ENCODE measurements at regions of chr16 and their contacts with region 1.

Region 1: DNA sequence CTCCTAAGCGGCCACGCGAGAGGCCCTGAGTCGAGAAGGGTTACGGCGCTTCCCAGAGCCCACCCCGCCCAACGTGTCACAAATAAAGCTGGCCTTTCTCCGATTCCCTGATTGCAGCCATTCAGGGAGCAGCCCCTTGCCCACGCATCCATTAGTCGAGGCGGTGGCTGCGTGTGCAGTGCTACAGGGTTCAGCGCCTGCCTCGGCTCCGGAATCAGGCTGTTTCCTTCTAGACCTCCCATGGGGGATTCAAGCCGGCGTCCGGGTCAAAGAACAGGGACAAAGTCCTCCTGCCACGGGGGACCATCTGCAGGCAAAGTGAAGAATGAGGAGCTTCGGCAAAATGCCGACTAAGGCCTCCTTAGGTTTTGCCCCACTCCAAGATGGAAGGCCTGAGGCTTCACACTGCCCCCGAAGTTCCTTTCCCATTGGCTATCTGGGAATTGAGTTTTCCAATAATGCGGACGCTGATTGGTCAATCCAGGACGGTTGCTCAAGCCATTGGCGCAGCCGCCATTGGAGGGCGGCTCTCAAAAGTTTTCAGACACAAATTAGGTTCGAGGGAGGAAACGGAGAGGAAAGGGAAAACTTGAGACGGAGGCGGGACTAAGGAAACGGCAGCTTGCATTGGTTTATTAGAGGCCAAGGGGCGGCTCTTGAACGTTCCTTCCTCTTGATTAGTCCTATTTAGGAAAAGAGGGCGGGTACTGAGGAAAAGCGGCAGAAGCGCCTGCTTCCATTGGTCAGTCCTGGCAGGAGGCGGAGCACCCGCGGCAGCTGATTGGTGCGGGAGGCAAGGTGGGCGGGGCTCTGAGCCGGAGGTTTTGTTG is 430 bp upstream of the KATNB1 start:
- DNase-seq: peak; percentile 94 to 100 (median 96)
- ATAC-seq: peak; percentile 88
- H3K4me3 ChIP-seq: peak overlapping the region; percentile 78
- H3K4me3 Mint-ChIP-seq: peak overlapping the region; percentile 95
- H3K27ac ChIP-seq: peak overlapping the region; percentile 60 to 77
- H3K27ac Mint-ChIP-seq: peak overlapping the region; percentile 87
- H3K4me1 ChIP-seq: peaks cover 29% of the 10 kb centered on the region
- H3K4me1 Mint-ChIP-seq: peaks cover 33% of the 10 kb centered on the region
- H3K27me3 ChIP-seq: no peaks in the 10 kb centered on the region
- H3K27me3 Mint-ChIP-seq: no peaks in the 10 kb centered on the region
- CTCF ChIP-seq: no peak

Region 2: GRCh38 chr16:57185944-57186871 is 548.9 kb before region 1 on chr16 and contains the starts of genes PSME3IP1 and RSPRY1:
- CTCF ChIA-PET with region 1: no interaction called
- POLR2A ChIA-PET with region 1: no interaction called
- intact Hi-C with region 1: loop called in 1 of 2 experiments (anchors 5 kb)
- DNase-seq: peak; percentile 95 to 100 (median 98)
- ATAC-seq: peak; percentile 89
- H3K4me3 ChIP-seq: peak within 1 kb of the TSS; percentile 96
- H3K4me3 Mint-ChIP-seq: peak within 1 kb of the TSS; percentile 94
- H3K27ac ChIP-seq: peak within 1 kb of the TSS; percentile 92
- H3K27ac Mint-ChIP-seq: peak within 1 kb of the TSS; percentile 90
- H3K4me1 ChIP-seq: peaks cover 25% of the 10 kb centered on the region
- H3K4me1 Mint-ChIP-seq: peaks cover 50% of the 10 kb centered on the region
- H3K27me3 ChIP-seq: no peaks in the 10 kb centered on the region
- H3K27me3 Mint-ChIP-seq: no peaks in the 10 kb centered on the region
- CTCF ChIP-seq: no peak
- total RNA-seq, gene PSME3IP1: 77.1 to 77.9 TPM
- total RNA-seq, gene RSPRY1: 19.9 to 21.3 TPM

Region 3: DNA sequence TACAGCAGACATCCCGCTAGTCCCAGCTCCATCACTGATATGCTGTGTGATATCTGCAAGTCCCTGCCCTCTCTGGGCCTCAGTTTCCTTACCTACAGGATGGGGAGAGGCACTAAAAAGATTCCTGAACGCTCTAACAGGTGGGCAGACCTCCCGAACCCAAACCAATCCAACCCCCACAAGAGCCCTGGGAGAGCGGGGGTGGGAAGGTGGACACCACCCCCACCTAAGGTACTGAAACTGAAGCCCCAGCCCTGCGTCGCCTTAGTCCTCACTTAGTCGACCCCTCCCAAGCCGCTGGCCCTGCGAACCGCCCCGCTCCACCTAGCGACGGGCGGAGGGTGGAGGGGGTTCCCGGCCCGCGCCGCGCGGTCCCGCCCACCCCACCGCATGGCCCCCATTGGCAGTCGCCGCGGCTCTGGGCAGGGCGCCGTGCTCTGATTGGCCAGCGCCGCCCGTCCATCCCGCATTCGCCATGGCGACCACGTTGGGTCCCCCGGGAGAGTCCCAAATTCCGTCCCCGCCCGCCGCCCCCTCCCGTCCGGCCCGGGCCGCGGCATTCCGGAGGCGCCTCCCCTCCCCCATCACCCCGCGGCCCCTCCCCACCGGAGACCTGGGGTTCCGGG is 199.3 kb before region 1 on chr16:
- CTCF ChIA-PET with region 1: no interaction called
- POLR2A ChIA-PET with region 1: interaction called, 7 read pairs
- intact Hi-C with region 1: loop called in 1 of 2 experiments (anchors 5 kb)
- DNase-seq: peak; percentile 87 to 98 (median 91)
- ATAC-seq: peak; percentile 85
- H3K4me3 ChIP-seq: peak overlapping the region; percentile 59
- H3K4me3 Mint-ChIP-seq: peak overlapping the region; percentile 89
- H3K27ac ChIP-seq: peak overlapping the region; percentile 94
- H3K27ac Mint-ChIP-seq: peak overlapping the region; percentile 96
- H3K4me1 ChIP-seq: peaks cover 79% of the 10 kb centered on the region
- H3K4me1 Mint-ChIP-seq: peaks cover 78% of the 10 kb centered on the region
- H3K27me3 ChIP-seq: no peaks in the 10 kb centered on the region
- H3K27me3 Mint-ChIP-seq: no peaks in the 10 kb centered on the region
- CTCF ChIP-seq: no peak

Region 4: GRCh38 chr16:57775661-57776469 is 40.7 kb after region 1 on chr16:
- CTCF ChIA-PET with region 1: no interaction called
- POLR2A ChIA-PET with region 1: no interaction called
- intact Hi-C with region 1: loop called in 1 of 2 experiments (anchors 1 kb)
- DNase-seq: peak in 1 of 14 experiments; percentile 12
- ATAC-seq: no peak
- H3K4me3 ChIP-seq: no peak overlapping the region
- H3K4me3 Mint-ChIP-seq: no peak overlapping the region
- H3K27ac ChIP-seq: no peak overlapping the region
- H3K27ac Mint-ChIP-seq: no peak overlapping the region
- H3K4me1 ChIP-seq: no peaks in the 10 kb centered on the region
- H3K4me1 Mint-ChIP-seq: no peaks in the 10 kb centered on the region
- H3K27me3 ChIP-seq: no peaks in the 10 kb centered on the region
- H3K27me3 Mint-ChIP-seq: no peaks in the 10 kb centered on the region
- CTCF ChIP-seq: no peak

Region 5: DNA sequence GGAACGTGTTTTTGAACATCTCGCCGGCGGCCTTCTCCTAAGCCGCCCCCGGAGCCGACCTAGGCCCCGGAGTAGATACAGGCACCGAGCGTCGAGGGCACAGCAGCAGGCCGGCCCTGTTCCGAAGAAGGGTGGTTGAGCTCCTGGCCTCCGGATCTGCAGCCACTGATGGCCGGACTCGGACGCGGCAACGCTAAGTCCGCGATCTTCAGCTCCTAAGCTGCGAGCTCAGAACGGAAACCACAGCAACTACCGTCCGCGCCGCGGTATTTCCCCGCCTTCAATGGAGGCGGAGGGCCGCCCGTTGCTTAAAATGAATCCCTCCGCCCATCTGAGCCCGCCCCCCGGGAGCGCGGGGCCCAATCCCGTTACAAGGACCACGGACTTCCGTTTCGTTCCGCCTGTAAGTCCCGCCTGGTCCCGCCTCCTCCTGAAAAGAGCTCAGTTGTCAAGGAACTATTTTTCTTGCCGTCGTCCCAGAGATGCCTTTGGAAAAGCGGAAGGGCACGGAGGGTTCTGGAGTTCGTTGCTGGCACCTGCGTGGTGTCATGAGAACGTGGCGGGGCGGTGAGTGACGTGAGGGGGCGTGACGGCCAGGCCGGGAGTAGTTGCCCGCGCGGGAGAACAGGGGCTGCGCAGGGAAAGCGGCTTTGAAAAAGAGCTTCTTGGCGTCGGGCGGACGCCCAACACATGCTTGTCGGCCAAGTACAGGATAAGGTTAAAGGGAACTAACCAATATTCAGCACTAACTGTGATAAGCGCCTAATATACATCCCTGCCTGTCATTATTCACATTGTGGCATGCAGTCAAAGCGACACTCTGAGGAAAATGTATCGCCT is 394.2 kb after region 1 on chr16 and contains the start of gene CFAP20:
- CTCF ChIA-PET with region 1: interaction called, 3 read pairs
- POLR2A ChIA-PET with region 1: interaction called, 18 read pairs
- intact Hi-C with region 1: loop called (anchors 5 to 10 kb)
- DNase-seq: peak; percentile 92 to 98 (median 96)
- ATAC-seq: peak; percentile 84
- H3K4me3 ChIP-seq: peak within 1 kb of the TSS; percentile 99
- H3K4me3 Mint-ChIP-seq: peak within 1 kb of the TSS; percentile 91
- H3K27ac ChIP-seq: peak within 1 kb of the TSS; percentile 84 to 88
- H3K27ac Mint-ChIP-seq: peak within 1 kb of the TSS; percentile 88
- H3K4me1 ChIP-seq: peaks cover 40% of the 10 kb centered on the region
- H3K4me1 Mint-ChIP-seq: peaks cover 47% of the 10 kb centered on the region
- H3K27me3 ChIP-seq: no peaks in the 10 kb centered on the region
- H3K27me3 Mint-ChIP-seq: no peaks in the 10 kb centered on the region
- CTCF ChIP-seq: no peak
- total RNA-seq, gene CFAP20: 250 to 261 TPM

Measured in CD4-positive, alpha-beta T cell (primary cell).